ENCODE measurements at regions of chr6 and their contacts with region 1.

Region 1: DNA sequence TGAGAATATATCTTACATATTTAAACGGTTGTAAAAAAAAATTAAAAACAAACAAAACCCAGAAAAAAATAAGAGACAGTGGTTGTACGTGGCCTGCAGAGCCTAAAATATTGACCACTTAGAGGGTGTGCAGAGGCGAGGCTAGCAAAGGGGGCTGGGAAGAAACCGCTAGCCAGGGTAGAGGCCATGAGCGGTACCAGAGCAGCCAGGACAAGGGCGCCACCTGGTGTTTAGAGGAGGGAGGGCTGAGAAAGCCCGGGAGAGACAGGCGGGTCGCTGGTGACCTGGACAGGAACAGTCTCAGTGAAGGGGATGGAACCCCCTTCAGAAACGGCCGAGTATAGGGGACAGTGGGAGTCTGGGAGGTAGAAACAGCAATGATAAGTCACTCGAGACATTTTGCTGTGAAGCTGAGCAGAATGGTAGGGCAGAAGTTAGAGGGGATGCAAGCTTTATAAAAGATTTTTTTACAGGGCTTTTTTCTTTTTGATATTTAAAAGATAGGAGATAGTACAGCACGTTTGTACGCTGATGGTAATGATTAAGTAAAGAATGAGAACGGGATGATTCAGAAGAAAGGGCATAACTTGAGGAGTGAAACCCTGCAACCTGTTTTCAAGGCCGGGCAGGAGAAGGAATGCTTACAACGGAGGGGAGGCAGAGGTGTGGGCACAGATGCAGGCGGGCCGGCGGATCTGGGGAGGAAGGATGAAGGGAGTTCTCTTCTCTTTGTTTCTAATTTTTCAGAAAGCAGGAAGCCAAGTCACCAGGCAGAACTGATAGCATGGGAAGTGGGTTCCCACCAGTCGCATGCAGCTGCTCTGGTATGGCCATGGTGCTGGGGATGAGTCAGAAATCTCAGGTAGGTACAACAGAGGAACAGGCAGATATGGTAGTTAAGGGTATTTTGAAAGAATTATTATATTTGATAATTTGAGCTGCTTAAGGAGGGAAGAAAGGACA is 76.2 kb downstream of the FAM229B start:
- DNase-seq: peak; percentile 7
- ATAC-seq: peak; percentile 100
- H3K4me3 ChIP-seq: no peak overlapping the region
- H3K27ac ChIP-seq: no peak overlapping the region
- H3K4me1 ChIP-seq: peaks cover 3% of the 10 kb centered on the region; the same call in 1 of the 2 replicates
- H3K27me3 ChIP-seq: peaks cover 3 to 14% of the 10 kb centered on the region in 2 experiments
- CTCF ChIP-seq: peak; percentile 82 to 96 (median 96)
- EP300 ChIP-seq: no peak
- POLR2A ChIP-seq: no peak
- RAD21 ChIP-seq: peak; percentile 90

Region 2: GRCh38 chr6:112087136-112087911 is 76.3 kb before region 1 on chr6 and contains the starts of genes FAM229B and TUBE1:
- CTCF ChIA-PET with region 1: interaction called, 33 read pairs
- POLR2A ChIA-PET with region 1: no interaction called
- RAD21 ChIA-PET with region 1: interaction called, 16 read pairs
- SMC1A ChIA-PET with region 1: interaction called, 8 read pairs
- in situ Hi-C with region 1: no loop called
- intact Hi-C with region 1: loop called (anchors 1 kb)
- DNase-seq: peak; percentile 79
- ATAC-seq: peak; percentile 98
- H3K4me3 ChIP-seq: peak within 1 kb of the TSS; percentile 88
- H3K27ac ChIP-seq: peak within 1 kb of the TSS; percentile 49
- H3K4me1 ChIP-seq: no peaks in the 10 kb centered on the region
- H3K27me3 ChIP-seq: peaks cover 0 to 4% of the 10 kb centered on the region in 2 experiments; a peak in 1 of 4 replicates
- CTCF ChIP-seq: 0 out of 6 replicates have a peak, but pooled peaks of 1 of the 3 experiments have one; percentile 1
- EP300 ChIP-seq: no peak
- POLR2A ChIP-seq: peak; percentile 89
- RAD21 ChIP-seq: no peak
- polyA plus RNA-seq, gene FAM229B: 5.3 to 5.7 TPM
- polyA plus RNA-seq, gene TUBE1: 6.3 to 8.6 TPM

Region 3: DNA sequence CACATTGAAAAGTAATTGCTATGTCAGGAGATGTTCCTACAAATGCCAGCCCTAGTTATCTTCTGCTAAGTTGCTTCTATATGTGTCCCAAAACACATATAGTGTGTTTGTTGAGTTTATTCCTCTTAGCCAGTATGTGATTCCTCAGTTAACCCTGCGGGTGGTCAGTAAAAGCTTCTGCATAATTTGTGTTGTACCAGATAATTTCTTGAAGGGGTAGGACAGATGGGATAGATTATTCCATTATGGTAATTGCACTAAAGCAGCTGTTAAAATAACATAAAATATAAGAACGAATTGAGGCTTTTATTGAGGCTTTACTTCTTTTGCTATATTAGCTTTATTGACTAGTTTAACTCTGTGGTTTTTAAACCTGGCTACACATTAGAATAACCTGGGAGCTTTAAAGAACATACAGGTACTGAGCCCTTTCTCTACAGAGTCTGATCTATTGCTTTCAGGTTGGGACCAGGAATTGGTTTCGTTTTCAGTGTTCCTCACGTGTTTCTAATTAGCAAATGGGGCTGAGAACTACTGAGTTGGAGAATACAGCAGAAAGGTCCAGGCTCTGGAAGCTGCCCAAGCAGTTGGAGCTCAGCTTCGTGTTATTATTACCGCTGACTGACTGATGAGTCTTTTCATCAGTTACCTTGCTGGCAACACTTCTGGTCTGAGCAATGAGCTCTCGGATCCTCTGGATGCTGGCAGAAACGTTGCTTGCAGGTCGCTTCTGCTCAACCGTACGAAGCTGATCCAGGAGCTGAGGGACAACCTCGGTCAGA is 19.2 kb before region 1 on chr6:
- CTCF ChIA-PET with region 1: interaction called, 13 read pairs
- POLR2A ChIA-PET with region 1: no interaction called
- RAD21 ChIA-PET with region 1: interaction called, 4 read pairs
- SMC1A ChIA-PET with region 1: interaction called, 3 read pairs
- in situ Hi-C with region 1: no loop called
- intact Hi-C with region 1: no loop called
- DNase-seq: no peak
- ATAC-seq: peak; percentile 54
- H3K4me3 ChIP-seq: no peak overlapping the region
- H3K27ac ChIP-seq: no peak overlapping the region
- H3K4me1 ChIP-seq: no peaks in the 10 kb centered on the region
- H3K27me3 ChIP-seq: peaks cover 0 to 3% of the 10 kb centered on the region in 2 experiments; a peak in 2 of 4 replicates
- CTCF ChIP-seq: no peak
- EP300 ChIP-seq: no peak
- POLR2A ChIP-seq: no peak
- RAD21 ChIP-seq: no peak

Region 4: DNA sequence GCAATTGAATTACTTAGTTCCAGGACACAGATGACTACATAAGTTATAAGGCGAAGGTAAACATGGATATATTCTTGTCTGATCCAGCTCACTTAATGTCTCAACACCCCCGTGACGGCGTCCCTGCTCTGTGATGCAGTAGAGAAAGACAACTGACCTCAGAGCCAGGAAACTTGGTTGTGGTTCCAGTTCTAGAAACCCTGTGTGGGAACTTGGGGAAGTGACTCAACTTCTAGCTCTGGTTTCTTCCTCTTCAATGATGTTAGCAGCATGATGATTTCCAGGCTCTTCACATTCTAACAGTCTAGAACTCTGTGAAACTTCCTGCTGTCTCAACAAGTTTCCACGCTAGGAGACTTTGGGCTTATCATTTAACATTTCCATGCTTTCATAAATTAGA is 72.4 kb after region 1 on chr6:
- CTCF ChIA-PET with region 1: no interaction called
- POLR2A ChIA-PET with region 1: no interaction called
- RAD21 ChIA-PET with region 1: no interaction called
- SMC1A ChIA-PET with region 1: no interaction called
- in situ Hi-C with region 1: no loop called
- intact Hi-C with region 1: no loop called
- DNase-seq: no peak
- ATAC-seq: no peak
- H3K4me3 ChIP-seq: no peak overlapping the region
- H3K27ac ChIP-seq: no peak overlapping the region
- H3K4me1 ChIP-seq: no peaks in the 10 kb centered on the region
- H3K27me3 ChIP-seq: no peaks in the 10 kb centered on the region; a peak in 2 of 4 replicates
- CTCF ChIP-seq: no peak
- EP300 ChIP-seq: no peak
- POLR2A ChIP-seq: no peak
- RAD21 ChIP-seq: no peak

Region 5: GRCh38 chr6:112269114-112269513 is 105.5 kb after region 1 on chr6:
- CTCF ChIA-PET with region 1: no interaction called
- POLR2A ChIA-PET with region 1: no interaction called
- RAD21 ChIA-PET with region 1: no interaction called
- SMC1A ChIA-PET with region 1: no interaction called
- in situ Hi-C with region 1: no loop called
- intact Hi-C with region 1: no loop called
- DNase-seq: no peak
- ATAC-seq: no peak
- H3K4me3 ChIP-seq: no peak overlapping the region
- H3K27ac ChIP-seq: no peak overlapping the region
- H3K4me1 ChIP-seq: no peaks in the 10 kb centered on the region
- H3K27me3 ChIP-seq: no peaks in the 10 kb centered on the region
- CTCF ChIP-seq: no peak
- EP300 ChIP-seq: no peak
- POLR2A ChIP-seq: no peak
- RAD21 ChIP-seq: no peak

Measured in GM12878 (cell line).